MCF 10A (cell line): ENCODE measurements at regions of chr4 and their contacts with region 1.

Region 1: DNA sequence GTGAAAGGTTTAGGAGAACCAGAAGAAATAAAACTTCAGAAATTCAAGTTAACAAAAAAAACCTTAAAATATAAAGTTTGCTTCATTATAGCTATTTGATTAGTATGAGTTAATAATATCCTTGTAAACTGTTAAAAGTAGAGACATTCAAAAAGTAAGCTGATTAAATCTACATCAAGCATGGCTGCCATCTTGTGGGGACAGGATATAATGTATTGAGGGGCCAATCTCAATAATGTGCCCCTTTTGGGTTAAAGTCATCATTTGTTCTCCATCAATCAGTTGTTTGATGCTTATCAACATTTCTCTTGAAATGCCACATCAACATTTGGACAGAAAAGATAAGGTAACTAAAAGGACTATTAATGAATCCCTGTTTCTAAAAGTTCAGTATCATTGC is 4.6 kb upstream of the GRID2 start:
- DNase-seq: peak; percentile 45
- H3K4me3 Mint-ChIP-seq: no peak overlapping the region
- H3K27ac Mint-ChIP-seq: no peak overlapping the region
- H3K4me1 Mint-ChIP-seq: peaks cover 8% of the 10 kb centered on the region
- H3K27me3 Mint-ChIP-seq: peaks cover 3% of the 10 kb centered on the region
- CTCF ChIP-seq: peak; percentile 51

Region 2: GRCh38 chr4:90357117-90357710 is 1941.9 kb before region 1 on chr4:
- CTCF ChIA-PET with region 1: no interaction called
- POLR2A ChIA-PET with region 1: no interaction called
- intact Hi-C with region 1: loop called (anchors 2 kb)
- DNase-seq: peak; percentile 78
- H3K4me3 Mint-ChIP-seq: no peak overlapping the region
- H3K27ac Mint-ChIP-seq: no peak overlapping the region
- H3K4me1 Mint-ChIP-seq: no peaks in the 10 kb centered on the region
- H3K27me3 Mint-ChIP-seq: no peaks in the 10 kb centered on the region
- CTCF ChIP-seq: peak; percentile 70

Region 3: DNA sequence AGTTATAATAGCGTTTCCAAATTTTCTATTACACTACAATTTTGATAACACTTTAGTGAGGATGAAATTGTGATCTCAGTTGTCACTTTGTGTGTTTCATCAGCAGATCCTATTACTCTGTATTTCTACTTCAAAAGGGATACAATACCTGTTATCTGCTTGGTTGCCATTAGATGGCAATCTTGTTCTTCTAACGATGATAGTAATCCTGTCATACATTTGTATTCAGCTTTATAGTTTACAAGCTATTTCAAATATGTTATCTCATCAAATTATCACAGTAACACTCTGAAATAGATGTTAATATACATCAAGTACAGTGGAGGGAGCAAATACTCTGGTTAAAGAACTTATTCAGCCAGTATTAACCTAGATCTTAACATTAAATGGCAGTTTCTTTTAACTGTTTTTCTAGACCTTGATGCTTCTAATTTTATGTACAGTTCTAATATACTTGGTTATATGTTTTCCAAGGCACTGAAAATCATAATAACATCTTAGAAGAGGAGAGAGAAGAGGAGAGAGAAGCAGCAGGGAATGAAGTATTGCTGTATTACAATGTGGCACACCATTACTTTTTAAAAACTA is 1879.9 kb before region 1 on chr4:
- CTCF ChIA-PET with region 1: interaction called, 4 read pairs
- POLR2A ChIA-PET with region 1: no interaction called
- intact Hi-C with region 1: loop called (anchors 2 kb)
- DNase-seq: peak; percentile 61
- H3K4me3 Mint-ChIP-seq: no peak overlapping the region
- H3K27ac Mint-ChIP-seq: no peak overlapping the region
- H3K4me1 Mint-ChIP-seq: no peaks in the 10 kb centered on the region
- H3K27me3 Mint-ChIP-seq: no peaks in the 10 kb centered on the region
- CTCF ChIP-seq: peak; percentile 56

Region 4: GRCh38 chr4:91734682-91735081 is 564.5 kb before region 1 on chr4:
- CTCF ChIA-PET with region 1: interaction called, 4 read pairs
- POLR2A ChIA-PET with region 1: no interaction called
- intact Hi-C with region 1: loop called (anchors 1 kb)
- DNase-seq: peak; percentile 23
- H3K4me3 Mint-ChIP-seq: no peak overlapping the region
- H3K27ac Mint-ChIP-seq: no peak overlapping the region
- H3K4me1 Mint-ChIP-seq: no peaks in the 10 kb centered on the region
- H3K27me3 Mint-ChIP-seq: no peaks in the 10 kb centered on the region
- CTCF ChIP-seq: no peak

Region 5: GRCh38 chr4:92172203-92172602 is 126.9 kb before region 1 on chr4:
- CTCF ChIA-PET with region 1: interaction called, 3 read pairs
- POLR2A ChIA-PET with region 1: no interaction called
- intact Hi-C with region 1: loop called (anchors 1 kb)
- DNase-seq: peak; percentile 23
- H3K4me3 Mint-ChIP-seq: no peak overlapping the region
- H3K27ac Mint-ChIP-seq: no peak overlapping the region
- H3K4me1 Mint-ChIP-seq: no peaks in the 10 kb centered on the region
- H3K27me3 Mint-ChIP-seq: no peaks in the 10 kb centered on the region
- CTCF ChIP-seq: peak; percentile 26

Region 6: DNA sequence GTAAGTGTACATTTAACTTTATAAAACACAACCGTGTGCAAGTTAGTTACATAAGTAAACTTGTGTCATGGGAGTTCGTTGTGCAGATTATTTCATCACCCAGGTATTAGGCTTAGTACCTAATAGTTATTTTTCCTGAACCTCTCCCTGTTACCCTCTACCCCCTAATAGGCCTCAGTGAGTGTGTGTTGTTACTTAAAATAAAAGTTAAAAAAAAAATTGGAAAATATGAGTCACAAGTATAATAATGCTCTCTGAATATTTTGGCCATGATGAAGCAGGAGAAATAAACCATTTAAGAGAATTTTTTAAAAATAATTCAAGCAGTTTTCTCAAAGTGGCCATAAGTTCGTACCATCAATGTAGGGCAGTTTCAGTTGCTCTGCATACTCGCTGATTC is 100.4 kb before region 1 on chr4:
- CTCF ChIA-PET with region 1: no interaction called
- POLR2A ChIA-PET with region 1: no interaction called
- intact Hi-C with region 1: no loop called
- DNase-seq: peak; percentile 3
- H3K4me3 Mint-ChIP-seq: no peak overlapping the region
- H3K27ac Mint-ChIP-seq: no peak overlapping the region
- H3K4me1 Mint-ChIP-seq: no peaks in the 10 kb centered on the region
- H3K27me3 Mint-ChIP-seq: no peaks in the 10 kb centered on the region
- CTCF ChIP-seq: no peak

Region 7: GRCh38 chr4:92535599-92535998 is 236.4 kb after region 1 on chr4:
- CTCF ChIA-PET with region 1: no interaction called
- POLR2A ChIA-PET with region 1: no interaction called
- intact Hi-C with region 1: no loop called
- DNase-seq: no peak
- H3K4me3 Mint-ChIP-seq: no peak overlapping the region
- H3K27ac Mint-ChIP-seq: no peak overlapping the region
- H3K4me1 Mint-ChIP-seq: no peaks in the 10 kb centered on the region
- H3K27me3 Mint-ChIP-seq: no peaks in the 10 kb centered on the region
- CTCF ChIP-seq: no peak